H1 (cell line): ENCODE measurements at regions of chr10 and their contacts with region 1.

Region 1: DNA sequence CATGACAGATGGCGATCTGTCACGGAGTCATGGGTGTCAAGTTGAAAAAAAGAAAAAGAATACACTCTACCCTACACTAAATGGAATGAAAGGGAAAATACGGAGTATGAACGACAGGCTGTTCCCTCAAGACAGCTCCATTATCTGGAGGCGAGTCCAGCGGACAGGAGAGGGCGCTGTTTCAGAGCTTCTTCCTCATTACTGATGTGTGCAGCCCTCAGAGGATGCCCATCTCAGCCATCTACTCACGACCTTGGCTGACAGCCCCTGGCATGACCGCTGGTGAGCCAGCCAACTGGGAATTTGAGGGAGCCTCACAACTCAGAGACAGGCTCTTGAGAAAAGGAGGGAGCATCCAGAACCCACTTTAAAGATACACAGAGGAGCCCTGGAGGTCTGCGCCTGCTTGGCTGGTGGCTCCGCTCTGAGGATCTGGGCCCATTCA is 49.6 kb upstream of the SMNDC1 start:
- DNase-seq: peak; percentile 58 to 92
- H3K4me3 ChIP-seq: peak overlapping the region in 1 of 4 experiments; percentile 33; a peak in 1 of 8 replicates
- H3K27ac ChIP-seq: no peak overlapping the region
- H3K4me1 ChIP-seq: peaks cover 5 to 14% (median 10%) of the 10 kb centered on the region in 4 experiments; a peak in 6 of 7 replicates
- H3K27me3 ChIP-seq: no peaks in the 10 kb centered on the region; a peak in 1 of 7 replicates
- CTCF ChIP-seq: peak; percentile 83 to 91 (median 87)
- EP300 ChIP-seq: no peak
- POLR2A ChIP-seq: no peak
- RAD21 ChIP-seq: peak; percentile 78 to 82

Region 2: DNA sequence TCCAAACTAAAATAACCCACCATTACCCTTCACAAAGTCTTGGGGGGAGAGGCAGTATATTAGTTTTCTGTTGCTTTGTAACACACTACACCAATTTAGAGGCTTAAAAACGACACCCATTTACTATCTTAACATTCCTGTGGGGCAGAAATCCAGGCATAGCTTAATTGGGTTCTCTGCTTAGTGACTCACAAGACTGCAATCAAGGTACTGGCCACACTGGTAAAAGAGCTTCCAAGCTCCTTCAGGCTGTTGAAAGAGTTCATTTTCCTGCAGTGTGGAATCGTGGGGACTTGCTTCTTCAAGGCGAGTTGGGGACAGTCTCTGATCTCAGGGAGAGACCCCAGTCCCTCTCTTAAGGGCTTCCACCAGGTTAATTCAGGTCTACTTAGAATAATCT is 570.1 kb before region 1 on chr10:
- CTCF ChIA-PET with region 1: no interaction called
- POLR2A ChIA-PET with region 1: no interaction called
- DNase-seq: no peak
- H3K4me3 ChIP-seq: no peak overlapping the region
- H3K27ac ChIP-seq: no peak overlapping the region
- H3K4me1 ChIP-seq: peaks cover 3 to 13% (median 6%) of the 10 kb centered on the region in 4 experiments; a peak in 6 of 7 replicates
- H3K27me3 ChIP-seq: no peaks in the 10 kb centered on the region; a peak in 1 of 7 replicates
- CTCF ChIP-seq: no peak
- EP300 ChIP-seq: no peak
- POLR2A ChIP-seq: no peak
- RAD21 ChIP-seq: no peak

Region 3: DNA sequence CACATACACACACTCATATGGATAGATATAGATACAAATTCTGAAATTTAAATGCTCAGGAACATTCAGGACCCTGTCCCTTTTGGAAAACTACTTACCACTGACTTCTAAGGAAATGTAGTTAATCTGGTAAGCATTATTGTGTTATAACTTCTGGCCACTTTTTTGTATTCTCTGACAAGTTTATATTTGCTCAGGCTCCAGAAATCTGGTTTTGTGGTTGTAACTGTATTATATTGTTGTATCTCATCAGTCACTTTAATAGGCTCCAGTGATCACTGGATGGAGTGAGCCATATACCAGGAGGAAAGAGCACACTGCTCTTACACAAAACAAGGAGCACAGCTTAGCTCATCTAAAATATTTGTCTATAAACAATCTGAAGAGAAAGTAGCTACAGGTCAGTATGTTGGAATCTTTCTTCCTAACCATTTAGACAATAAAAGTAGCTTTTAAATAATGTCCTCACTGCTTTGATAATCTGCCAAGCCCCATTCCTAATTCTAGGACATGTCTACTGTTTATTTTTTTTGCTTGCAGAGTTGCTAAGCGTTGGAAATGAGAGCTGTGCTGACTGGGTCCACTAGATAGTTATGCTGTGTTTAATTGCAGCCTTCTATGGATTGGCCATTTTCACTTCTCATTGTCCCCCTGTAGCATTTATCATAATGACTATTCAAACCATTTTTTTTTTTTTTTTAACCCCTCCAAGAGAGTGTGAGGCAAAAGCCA is 93.4 kb before region 1 on chr10:
- CTCF ChIA-PET with region 1: no interaction called
- POLR2A ChIA-PET with region 1: no interaction called
- DNase-seq: no peak
- H3K4me3 ChIP-seq: no peak overlapping the region
- H3K27ac ChIP-seq: no peak overlapping the region
- H3K4me1 ChIP-seq: no peaks in the 10 kb centered on the region
- H3K27me3 ChIP-seq: no peaks in the 10 kb centered on the region
- CTCF ChIP-seq: no peak
- EP300 ChIP-seq: no peak
- POLR2A ChIP-seq: no peak
- RAD21 ChIP-seq: no peak

Region 4: DNA sequence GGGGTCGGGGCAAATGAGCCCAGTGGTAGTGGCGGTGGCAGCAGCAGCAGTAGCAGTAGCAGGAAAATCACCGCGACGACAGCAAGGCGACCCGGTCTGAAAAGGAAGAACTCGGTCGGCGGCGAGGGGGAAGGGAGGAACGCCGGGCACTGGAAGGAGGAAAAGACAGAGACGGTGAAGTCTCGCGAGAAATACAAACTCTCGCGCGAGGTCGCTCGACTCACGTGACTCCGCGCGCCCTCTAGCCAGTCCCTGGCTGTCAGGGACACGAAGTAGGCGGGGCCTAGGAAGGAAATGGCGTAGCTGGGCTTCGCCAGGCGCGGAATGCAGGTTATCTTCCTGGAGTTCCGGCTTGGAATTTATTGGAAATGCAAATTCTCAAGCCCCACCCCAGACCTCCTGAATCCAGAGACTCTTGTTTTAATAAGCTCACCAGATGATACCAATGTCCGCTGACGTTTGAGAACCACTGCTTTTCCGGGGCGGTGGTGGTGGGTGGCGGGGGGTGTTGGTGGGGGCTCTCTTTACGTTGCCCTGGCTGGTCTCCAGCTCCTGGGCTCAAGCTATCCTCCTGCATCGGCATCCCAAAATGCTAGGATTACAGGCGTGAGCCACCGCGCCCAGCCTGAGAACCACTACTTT is 49.4 kb before region 1 on chr10 and contains the start of gene SMNDC1:
- CTCF ChIA-PET with region 1: interaction called, 15 read pairs
- POLR2A ChIA-PET with region 1: interaction called, 3 read pairs
- DNase-seq: peak; percentile 97 to 99
- H3K4me3 ChIP-seq: peak within 1 kb of the TSS; percentile 66 to 90 (median 78)
- H3K27ac ChIP-seq: peak within 1 kb of the TSS; percentile 81
- H3K4me1 ChIP-seq: 0 out of 7 replicates have a peak, but pooled peaks cover 0 to 3% (median 0%) of the 10 kb centered on the region in 4 experiments
- H3K27me3 ChIP-seq: no peaks in the 10 kb centered on the region
- CTCF ChIP-seq: no peak
- EP300 ChIP-seq: 0 out of 3 replicates have a peak, but pooled peaks of 1 of the 2 experiments have one; percentile 6
- POLR2A ChIP-seq: peak; percentile 79 to 89
- RAD21 ChIP-seq: no peak
- total RNA-seq, gene SMNDC1: 48.6 and 53.5 TPM in 2 replicates

Region 5: GRCh38 chr10:110368002-110368401 is 13.7 kb after region 1 on chr10:
- CTCF ChIA-PET with region 1: interaction called, 49 read pairs
- POLR2A ChIA-PET with region 1: interaction called, 3 read pairs
- DNase-seq: no peak
- H3K4me3 ChIP-seq: no peak overlapping the region
- H3K27ac ChIP-seq: no peak overlapping the region
- H3K4me1 ChIP-seq: peaks cover 0 to 6% (median 2%) of the 10 kb centered on the region in 4 experiments; a peak in 4 of 7 replicates
- H3K27me3 ChIP-seq: no peaks in the 10 kb centered on the region
- CTCF ChIP-seq: no peak
- EP300 ChIP-seq: no peak
- POLR2A ChIP-seq: no peak
- RAD21 ChIP-seq: no peak

Region 6: DNA sequence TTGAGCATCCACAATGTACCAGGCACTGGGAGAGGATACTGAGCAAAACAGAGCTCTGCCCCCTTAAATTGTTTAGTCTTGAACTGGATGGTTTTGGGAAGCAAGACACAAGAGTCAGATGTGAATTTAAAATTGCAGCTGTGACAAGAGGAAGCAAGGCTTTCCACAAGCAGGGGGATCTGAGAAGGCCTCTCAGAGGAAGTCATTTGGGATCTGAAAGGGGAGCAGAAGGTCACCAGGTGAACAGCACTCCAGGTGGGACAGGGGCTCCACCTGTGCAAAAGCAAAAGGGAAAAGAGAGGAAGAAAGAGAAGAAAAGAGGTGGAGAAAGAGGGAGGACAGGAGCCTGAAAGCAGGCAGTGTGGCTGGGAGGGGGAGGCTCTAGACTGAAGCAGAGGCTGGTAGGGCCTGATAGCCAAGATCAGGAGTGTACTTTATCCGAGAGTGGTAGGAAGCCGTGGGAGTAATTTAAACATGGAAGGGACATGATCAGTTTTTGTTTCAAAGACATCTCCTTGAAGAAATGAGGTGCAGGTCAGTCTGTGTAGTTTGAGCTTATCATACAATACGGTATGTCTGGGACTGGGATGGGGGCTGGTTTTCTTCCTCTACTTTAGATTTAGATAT is 67.3 kb after region 1 on chr10:
- CTCF ChIA-PET with region 1: interaction called, 11 read pairs
- POLR2A ChIA-PET with region 1: no interaction called
- DNase-seq: no peak
- H3K4me3 ChIP-seq: no peak overlapping the region
- H3K27ac ChIP-seq: no peak overlapping the region
- H3K4me1 ChIP-seq: peaks cover 0 to 4% (median 2%) of the 10 kb centered on the region in 4 experiments; a peak in 3 of 7 replicates
- H3K27me3 ChIP-seq: no peaks in the 10 kb centered on the region
- CTCF ChIP-seq: no peak
- EP300 ChIP-seq: no peak
- POLR2A ChIP-seq: no peak
- RAD21 ChIP-seq: no peak

Region 7: GRCh38 chr10:110481934-110482333 is 127.6 kb after region 1 on chr10:
- CTCF ChIA-PET with region 1: interaction called, 13 read pairs
- POLR2A ChIA-PET with region 1: no interaction called
- DNase-seq: no peak
- H3K4me3 ChIP-seq: no peak overlapping the region
- H3K27ac ChIP-seq: no peak overlapping the region
- H3K4me1 ChIP-seq: peaks cover 0 to 3% (median under 1%) of the 10 kb centered on the region in 4 experiments; a peak in 3 of 7 replicates
- H3K27me3 ChIP-seq: no peaks in the 10 kb centered on the region
- CTCF ChIP-seq: no peak
- EP300 ChIP-seq: no peak
- POLR2A ChIP-seq: no peak
- RAD21 ChIP-seq: no peak

Region 8: GRCh38 chr10:110530131-110530831 is 175.9 kb after region 1 on chr10:
- CTCF ChIA-PET with region 1: interaction called, 16 read pairs
- POLR2A ChIA-PET with region 1: interaction called, 3 read pairs
- DNase-seq: peak; percentile 54 to 86
- H3K4me3 ChIP-seq: peak overlapping the region; percentile 27 to 65 (median 42); a peak in 7 of 8 replicates
- H3K27ac ChIP-seq: peak overlapping the region; percentile 57; the same call in 1 of the 2 replicates
- H3K4me1 ChIP-seq: peaks cover 4 to 17% (median 5%) of the 10 kb centered on the region in 4 experiments
- H3K27me3 ChIP-seq: no peaks in the 10 kb centered on the region; a peak in 1 of 7 replicates
- CTCF ChIP-seq: no peak
- EP300 ChIP-seq: no peak
- POLR2A ChIP-seq: peak in 1 of 2 experiments; percentile 30; a peak in 1 of 3 replicates
- RAD21 ChIP-seq: 0 out of 4 replicates have a peak, but pooled peaks of 1 of the 2 experiments have one; percentile 0